Psoas muscle (tissue), 8 donors: ENCODE measurements at regions of chr11 and their contacts with region 1.

Region 1: DNA sequence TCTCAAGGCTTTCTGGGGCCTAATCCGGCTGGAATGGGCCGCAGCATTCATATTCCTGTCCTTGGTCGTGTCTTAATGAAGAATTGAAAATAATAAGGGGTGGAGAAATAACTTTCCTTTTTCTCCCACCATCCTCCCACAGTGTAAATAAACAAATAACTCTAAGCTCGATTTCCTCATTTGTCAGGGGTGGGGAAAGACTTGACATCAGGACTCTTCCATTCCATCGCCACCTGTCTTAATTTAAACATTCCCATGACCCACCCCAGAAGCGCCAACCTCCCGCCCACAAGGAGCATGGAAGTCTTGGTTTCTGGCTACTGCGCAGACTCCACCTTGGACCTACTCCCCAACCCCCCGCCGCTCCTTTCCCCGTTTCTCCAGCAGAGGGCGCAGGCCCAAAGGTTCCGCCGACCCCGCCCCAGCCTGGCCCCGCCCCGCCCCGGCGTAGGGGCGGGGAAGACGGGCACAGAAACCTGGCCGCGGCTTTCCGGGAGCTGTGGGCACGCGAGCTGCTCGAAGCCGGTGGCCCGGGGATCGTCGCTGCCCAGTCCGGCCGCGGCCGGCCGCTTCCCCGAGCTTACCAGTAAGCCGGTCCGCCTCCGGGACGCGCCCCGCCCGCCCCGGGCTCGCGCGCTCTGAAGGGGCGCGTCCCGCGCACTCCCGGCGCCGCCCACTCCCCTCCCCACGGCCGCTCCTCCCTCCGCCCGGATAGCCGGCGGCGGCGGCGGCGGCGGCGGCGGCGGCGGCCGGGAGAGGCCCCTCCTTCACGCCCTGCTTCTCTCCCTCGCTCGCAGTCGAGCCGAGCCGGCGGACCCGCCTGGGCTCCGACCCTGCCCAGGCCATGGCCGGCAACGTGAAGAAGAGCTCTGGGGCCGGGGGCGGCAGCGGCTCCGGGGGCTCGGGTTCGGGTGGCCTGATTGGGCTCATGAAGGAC is at the start of gene CBL:
- DNase-seq: peak; percentile 94 to 97
- ATAC-seq: peak; percentile 97 to 98 (median 97)
- H3K4me3 ChIP-seq: peak within 1 kb of the TSS; percentile 91
- H3K27ac ChIP-seq: peak within 1 kb of the TSS; percentile 90
- H3K4me1 ChIP-seq: peaks cover 13% of the 10 kb centered on the region
- H3K27me3 ChIP-seq: no peaks in the 10 kb centered on the region
- CTCF ChIP-seq: peak; percentile 79
- total RNA-seq, gene CBL: 3.6 to 7.6 (median 7.2) TPM

Region 2: GRCh38 chr11:119254239-119254638 is 48.4 kb after region 1 on chr11:
- intact Hi-C with region 1: no loop called
- DNase-seq: no peak
- ATAC-seq: no peak
- H3K4me3 ChIP-seq: no peak overlapping the region
- H3K27ac ChIP-seq: no peak overlapping the region
- H3K4me1 ChIP-seq: no peaks in the 10 kb centered on the region
- H3K27me3 ChIP-seq: no peaks in the 10 kb centered on the region
- CTCF ChIP-seq: no peak

Region 3: GRCh38 chr11:119266517-119267255 is 60.8 kb after region 1 on chr11:
- intact Hi-C with region 1: loop called in 1 of 2 experiments (anchors 5 kb)
- DNase-seq: no peak
- ATAC-seq: no peak
- H3K4me3 ChIP-seq: no peak overlapping the region
- H3K27ac ChIP-seq: no peak overlapping the region
- H3K4me1 ChIP-seq: peaks cover 25% of the 10 kb centered on the region
- H3K27me3 ChIP-seq: no peaks in the 10 kb centered on the region
- CTCF ChIP-seq: no peak

Region 4: DNA sequence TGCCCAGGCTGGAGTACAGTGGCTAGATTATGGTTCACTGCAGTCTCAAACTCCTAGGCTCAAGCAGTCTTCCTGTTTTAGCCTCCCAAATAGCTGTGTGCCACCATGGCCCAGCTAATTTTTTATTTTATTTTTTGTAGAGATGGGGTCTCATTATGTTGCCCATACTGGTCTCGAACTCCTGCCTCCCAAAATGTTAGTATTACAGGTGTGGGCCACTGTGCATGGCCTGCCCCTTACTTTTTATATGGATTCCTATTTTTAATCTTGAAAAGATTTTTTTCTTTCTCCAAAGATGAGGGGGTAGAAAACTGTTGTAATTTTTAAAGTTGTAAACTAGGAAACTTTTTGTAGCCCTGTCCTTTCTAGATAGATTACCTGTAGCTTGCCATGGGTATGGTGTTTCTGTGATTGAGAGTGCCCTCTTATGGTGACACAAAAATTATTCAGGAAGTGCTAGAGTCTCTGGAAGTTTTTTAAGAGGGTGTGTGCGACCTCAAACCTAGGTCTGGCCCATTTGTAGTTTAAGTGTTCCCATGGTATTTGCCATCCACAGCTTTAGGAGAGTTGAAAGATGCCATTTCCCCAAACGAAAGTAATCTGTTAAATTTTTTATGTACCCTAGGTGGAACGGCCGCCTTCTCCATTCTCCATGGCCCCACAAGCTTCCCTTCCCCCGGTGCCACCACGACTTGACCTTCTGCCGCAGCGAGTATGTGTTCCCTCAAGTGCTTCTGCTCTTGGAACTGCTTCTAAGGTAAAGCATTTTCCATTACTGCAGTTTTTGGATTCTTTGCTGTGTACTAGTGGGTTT is 78.7 kb after region 1 on chr11:
- intact Hi-C with region 1: loop called (anchors 5 to 10 kb)
- DNase-seq: no peak
- ATAC-seq: peak; percentile 57 to 79 (median 66)
- H3K4me3 ChIP-seq: no peak overlapping the region
- H3K27ac ChIP-seq: no peak overlapping the region
- H3K4me1 ChIP-seq: no peaks in the 10 kb centered on the region
- H3K27me3 ChIP-seq: no peaks in the 10 kb centered on the region
- CTCF ChIP-seq: peak; percentile 52

Region 5: DNA sequence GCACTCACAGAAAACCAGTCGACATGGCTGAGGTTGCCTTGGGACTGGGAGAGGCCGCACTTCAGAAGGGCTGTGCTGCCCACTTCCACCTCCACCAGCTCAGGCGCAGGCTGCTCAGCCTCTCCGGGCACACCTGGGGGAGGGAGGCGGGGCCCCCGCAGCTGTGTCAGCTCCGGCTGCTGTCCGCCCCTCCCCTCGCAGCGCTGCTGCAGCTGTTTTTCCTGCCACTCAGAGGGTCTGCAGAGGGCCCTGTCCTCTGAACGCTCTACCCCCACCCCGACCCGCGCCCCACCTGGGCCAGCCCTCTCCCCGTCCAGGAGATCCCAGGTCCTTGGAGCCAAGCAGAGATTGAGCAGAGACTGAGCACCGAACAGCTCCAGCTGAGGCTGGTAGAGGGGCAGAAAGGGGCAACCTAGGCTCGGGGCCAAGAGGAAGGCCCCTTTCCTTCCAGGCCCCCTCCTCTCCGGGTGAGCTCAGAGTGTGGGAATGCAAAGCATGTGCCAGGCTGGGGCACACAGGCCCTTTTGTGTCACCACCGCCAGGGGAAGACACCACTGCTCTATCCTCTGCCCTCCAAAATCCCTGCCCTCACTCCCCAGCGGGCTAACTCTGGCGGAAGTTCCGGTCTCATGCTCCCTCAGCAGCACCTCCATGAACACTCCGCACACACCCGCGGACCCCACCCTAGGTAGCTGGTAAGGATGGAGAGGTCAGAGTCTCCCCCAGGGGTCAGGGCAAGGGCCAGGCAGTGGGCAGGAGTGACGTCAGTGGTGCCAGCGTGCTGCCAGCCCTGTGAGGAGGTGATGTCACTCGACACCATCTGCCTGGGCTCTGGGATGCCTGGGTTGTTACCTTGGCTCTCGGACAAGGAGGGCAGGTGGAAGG is 109.5 kb after region 1 on chr11:
- intact Hi-C with region 1: loop called (anchors 5 to 10 kb)
- DNase-seq: peak in 1 of 2 donors; percentile 35
- ATAC-seq: peak; percentile 33 to 62 (median 50)
- H3K4me3 ChIP-seq: peak overlapping the region; percentile 77
- H3K27ac ChIP-seq: peak overlapping the region; percentile 80
- H3K4me1 ChIP-seq: peaks cover 4% of the 10 kb centered on the region
- H3K27me3 ChIP-seq: no peaks in the 10 kb centered on the region
- CTCF ChIP-seq: no peak

Region 6: DNA sequence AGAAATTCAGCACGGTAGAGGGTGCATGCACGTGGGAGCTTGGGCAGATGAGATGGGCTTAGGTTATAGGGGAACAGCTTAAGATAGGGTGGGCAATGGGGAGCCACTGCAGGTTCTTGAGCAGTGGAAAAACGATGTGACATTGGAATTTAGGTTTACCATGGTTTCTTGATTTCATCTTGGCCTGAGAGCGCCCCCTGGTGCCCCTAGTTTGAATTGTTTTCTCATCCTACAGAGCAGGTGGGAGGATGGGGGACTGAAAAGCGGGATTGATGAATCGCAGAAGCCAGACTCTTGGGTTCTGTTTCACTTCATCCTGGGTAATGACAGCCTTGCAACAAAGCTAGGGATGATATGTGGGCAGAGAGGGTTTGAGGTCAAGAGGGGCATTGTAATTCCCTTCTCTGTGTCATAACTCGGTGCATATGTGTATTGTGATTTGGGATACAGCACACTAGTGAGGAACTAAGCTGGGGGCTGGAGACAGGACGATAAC is 117.7 kb after region 1 on chr11:
- intact Hi-C with region 1: loop called (anchors 5 to 10 kb)
- DNase-seq: peak; percentile 73 to 81
- ATAC-seq: peak in 2 of 4 donors; percentile 38 to 62
- H3K4me3 ChIP-seq: no peak overlapping the region
- H3K27ac ChIP-seq: no peak overlapping the region
- H3K4me1 ChIP-seq: peaks cover 4% of the 10 kb centered on the region
- H3K27me3 ChIP-seq: no peaks in the 10 kb centered on the region
- CTCF ChIP-seq: peak; percentile 70

Region 7: GRCh38 chr11:119334174-119334930 is 128.5 kb after region 1 on chr11 and contains the start of gene RNF26:
- intact Hi-C with region 1: loop called (anchors 5 kb)
- DNase-seq: peak; percentile 91 to 96
- ATAC-seq: peak; percentile 90 to 94 (median 90)
- H3K4me3 ChIP-seq: peak within 1 kb of the TSS; percentile 94
- H3K27ac ChIP-seq: peak within 1 kb of the TSS; percentile 95
- H3K4me1 ChIP-seq: peaks cover 41% of the 10 kb centered on the region
- H3K27me3 ChIP-seq: no peaks in the 10 kb centered on the region
- CTCF ChIP-seq: no peak
- total RNA-seq, gene RNF26: 6.1 to 8.8 (median 7.5) TPM